ENCODE measurements at regions of chr4 and their contacts with region 1.

Region 1: GRCh38 chr4:83455281-83456129 is at the starts of genes HELQ and MRPS18C:
- DNase-seq: peak; percentile 82
- ATAC-seq: peak; percentile 92
- H3K4me3 Mint-ChIP-seq: peak within 1 kb of the TSS; percentile 99
- H3K27ac Mint-ChIP-seq: peak within 1 kb of the TSS; percentile 99
- H3K4me1 Mint-ChIP-seq: peaks cover 55% of the 10 kb centered on the region
- H3K27me3 Mint-ChIP-seq: no peaks in the 10 kb centered on the region
- CTCF ChIP-seq: no peak
- total RNA-seq, gene HELQ: 31.9 and 32.9 TPM in 2 replicates
- total RNA-seq, gene MRPS18C: 56.0 and 56.5 TPM in 2 replicates

Region 2: GRCh38 chr4:82373816-82374625 is 1081.5 kb before region 1 on chr4 and contains the start of gene HNRNPD:
- CTCF ChIA-PET with region 1: no interaction called
- POLR2A ChIA-PET with region 1: no interaction called
- intact Hi-C with region 1: loop called (anchors 5 kb)
- DNase-seq: peak; percentile 83
- ATAC-seq: peak; percentile 88
- H3K4me3 Mint-ChIP-seq: peak within 1 kb of the TSS; percentile 98
- H3K27ac Mint-ChIP-seq: peak within 1 kb of the TSS; percentile 100
- H3K4me1 Mint-ChIP-seq: peaks cover 55% of the 10 kb centered on the region
- H3K27me3 Mint-ChIP-seq: no peaks in the 10 kb centered on the region
- CTCF ChIP-seq: no peak
- total RNA-seq, gene HNRNPD: 300 and 350 TPM in 2 replicates

Region 3: GRCh38 chr4:83034630-83035494 is 420.6 kb before region 1 on chr4 and contains the start of gene COPS4:
- CTCF ChIA-PET with region 1: no interaction called
- POLR2A ChIA-PET with region 1: interaction called, 9 read pairs
- intact Hi-C with region 1: loop called (anchors 1 kb)
- DNase-seq: peak; percentile 82
- ATAC-seq: peak; percentile 96
- H3K4me3 Mint-ChIP-seq: peak within 1 kb of the TSS; percentile 99
- H3K27ac Mint-ChIP-seq: peak within 1 kb of the TSS; percentile 100
- H3K4me1 Mint-ChIP-seq: peaks cover 31% of the 10 kb centered on the region
- H3K27me3 Mint-ChIP-seq: no peaks in the 10 kb centered on the region
- CTCF ChIP-seq: no peak
- total RNA-seq, gene COPS4: 32.7 and 36.7 TPM in 2 replicates

Region 4: DNA sequence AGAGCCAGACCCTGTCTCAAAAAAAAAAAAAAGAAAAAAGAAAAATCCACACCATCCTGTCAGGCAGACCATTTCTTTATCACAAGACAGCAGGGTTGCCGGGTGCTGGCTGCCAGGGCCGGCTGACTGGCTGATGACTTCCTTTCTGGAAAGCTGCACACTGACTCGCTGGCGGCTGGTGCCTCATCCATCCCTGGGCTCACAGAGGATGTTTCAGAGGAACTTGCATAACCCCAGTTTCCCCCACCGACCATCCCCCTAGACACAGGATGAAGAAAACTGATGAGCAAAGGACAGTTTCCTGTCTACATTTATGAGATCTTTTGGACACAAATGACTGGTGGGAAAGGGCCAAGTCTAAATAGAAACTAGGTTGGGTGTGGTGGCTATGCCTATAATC is 135.0 kb before region 1 on chr4:
- CTCF ChIA-PET with region 1: no interaction called
- POLR2A ChIA-PET with region 1: no interaction called
- intact Hi-C with region 1: no loop called
- DNase-seq: no peak
- ATAC-seq: no peak
- H3K4me3 Mint-ChIP-seq: no peak overlapping the region
- H3K27ac Mint-ChIP-seq: no peak overlapping the region
- H3K4me1 Mint-ChIP-seq: no peaks in the 10 kb centered on the region
- H3K27me3 Mint-ChIP-seq: no peaks in the 10 kb centered on the region
- CTCF ChIP-seq: no peak

Region 5: DNA sequence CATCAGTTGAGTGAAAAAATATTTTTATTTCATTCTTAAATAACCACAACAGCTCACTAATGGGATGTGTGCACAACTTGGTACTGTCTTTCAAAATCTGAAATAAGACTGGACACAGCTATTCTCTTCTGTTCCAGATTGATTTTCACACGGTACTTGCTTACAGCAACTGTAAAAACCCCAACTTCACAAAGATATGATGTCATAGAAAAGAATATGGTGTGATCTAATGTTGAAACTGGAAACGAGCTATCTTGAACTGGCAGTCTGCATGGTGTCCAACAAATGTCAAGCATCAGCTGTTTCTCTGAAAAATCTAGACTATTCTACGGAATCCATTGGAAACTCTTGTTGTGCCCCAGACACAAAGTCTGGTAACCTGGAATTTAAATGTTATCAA is 14.6 kb before region 1 on chr4:
- CTCF ChIA-PET with region 1: interaction called, 3 read pairs
- POLR2A ChIA-PET with region 1: interaction called, 22 read pairs
- intact Hi-C with region 1: loop called (anchors 1 kb)
- DNase-seq: no peak
- ATAC-seq: peak; percentile 49
- H3K4me3 Mint-ChIP-seq: no peak overlapping the region
- H3K27ac Mint-ChIP-seq: peak overlapping the region; percentile 83
- H3K4me1 Mint-ChIP-seq: peaks cover 37% of the 10 kb centered on the region
- H3K27me3 Mint-ChIP-seq: no peaks in the 10 kb centered on the region
- CTCF ChIP-seq: no peak

Region 6: GRCh38 chr4:83582289-83582769 is 126.8 kb after region 1 on chr4:
- CTCF ChIA-PET with region 1: no interaction called
- POLR2A ChIA-PET with region 1: interaction called, 3 read pairs
- intact Hi-C with region 1: loop called (anchors 1 kb)
- DNase-seq: peak; percentile 26
- ATAC-seq: peak; percentile 65
- H3K4me3 Mint-ChIP-seq: peak overlapping the region; percentile 75
- H3K27ac Mint-ChIP-seq: peak overlapping the region; percentile 83
- H3K4me1 Mint-ChIP-seq: peaks cover 21% of the 10 kb centered on the region
- H3K27me3 Mint-ChIP-seq: no peaks in the 10 kb centered on the region
- CTCF ChIP-seq: no peak

Measured in activated B cell treated with CpG ODN at 0.5 μM for 24 hours (primary cell).